ENCODE measurements at regions of chr1 and their contacts with region 1.

Region 1: GRCh38 chr1:197924516-197925123 is 7.4 kb downstream of the LHX9 start:
- DNase-seq: no peak
- H3K4me3 ChIP-seq: no peak overlapping the region
- H3K27ac ChIP-seq: no peak overlapping the region
- H3K4me1 ChIP-seq: peaks cover 0 to 6% (median 2%) of the 10 kb centered on the region in 4 donors
- H3K27me3 ChIP-seq: peaks cover 4 to 48% of the 10 kb centered on the region in 2 donors
- CTCF ChIP-seq: peak; percentile 61 to 68

Region 2: DNA sequence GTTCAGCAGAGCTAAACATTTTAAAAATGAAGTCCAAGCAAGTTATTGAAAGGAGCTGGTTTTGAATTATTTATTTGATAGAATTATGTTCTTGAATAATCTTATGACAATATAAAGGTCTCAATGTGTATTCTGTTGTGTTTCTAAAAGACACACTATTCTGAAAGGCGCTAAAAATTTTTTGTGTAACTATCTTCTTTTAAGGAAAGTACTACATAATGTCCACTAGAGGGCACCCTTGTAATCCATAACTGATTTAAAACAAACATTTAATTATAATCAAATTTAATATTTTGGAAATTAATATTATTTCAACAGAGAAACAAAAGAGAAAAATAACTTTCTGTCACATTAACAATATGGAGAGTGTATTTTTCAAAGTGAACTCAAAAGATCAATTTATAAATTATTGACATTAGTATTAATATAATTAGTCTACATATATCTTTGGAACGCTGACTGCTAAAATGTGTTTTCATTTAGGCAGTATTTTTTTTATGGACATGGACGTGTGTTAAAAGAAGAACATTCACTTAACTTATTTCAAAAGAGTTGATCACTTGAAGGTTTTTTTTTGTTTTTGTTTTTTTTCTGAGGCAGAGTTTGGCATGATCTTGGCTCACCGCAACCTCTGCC is 397.8 kb before region 1 on chr1:
- intact Hi-C with region 1: loop called (anchors 5 kb)
- DNase-seq: no peak
- H3K4me3 ChIP-seq: no peak overlapping the region
- H3K27ac ChIP-seq: no peak overlapping the region
- H3K4me1 ChIP-seq: peaks cover 0 to 7% (median 1%) of the 10 kb centered on the region in 4 donors
- H3K27me3 ChIP-seq: no peaks in the 10 kb centered on the region
- CTCF ChIP-seq: peak; percentile 38 to 68

Region 3: DNA sequence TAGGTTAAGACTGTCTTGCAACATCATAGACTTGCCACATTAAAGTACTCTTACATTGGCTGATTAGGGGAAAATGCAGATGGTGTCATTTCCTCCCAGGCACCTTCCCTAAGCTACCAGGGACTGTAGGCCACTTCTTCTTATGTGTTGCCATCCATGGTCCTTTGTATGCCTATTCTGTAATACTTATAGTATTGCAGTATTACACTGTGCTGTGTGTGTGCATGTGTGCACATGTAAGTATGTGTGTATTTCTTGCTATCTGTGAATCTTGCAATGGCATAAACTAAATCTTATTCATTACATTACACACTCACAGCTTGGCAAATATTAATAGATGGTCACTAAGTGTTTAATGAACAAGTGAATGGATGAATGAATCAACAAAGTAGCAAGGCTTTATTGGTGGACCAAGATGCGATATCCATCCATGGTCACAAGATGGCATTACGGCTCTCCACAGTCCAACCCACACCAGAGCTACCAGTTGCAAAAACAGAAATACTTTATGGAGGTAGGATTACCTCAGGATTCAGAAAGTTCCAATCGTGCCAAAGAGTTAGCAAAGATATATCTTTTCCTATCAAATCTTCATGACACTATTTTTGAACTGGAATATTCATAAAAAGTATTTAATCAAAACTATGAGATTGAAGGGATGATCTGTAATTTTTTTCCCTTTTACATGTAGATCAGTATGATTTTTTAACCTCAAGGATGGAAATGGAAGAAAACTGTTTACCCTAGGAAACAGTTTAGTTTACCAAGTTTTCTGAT is 309.5 kb before region 1 on chr1:
- intact Hi-C with region 1: loop called (anchors 5 kb)
- DNase-seq: peak in 1 of 2 donors; percentile 23
- H3K4me3 ChIP-seq: no peak overlapping the region
- H3K27ac ChIP-seq: no peak overlapping the region
- H3K4me1 ChIP-seq: no peaks in the 10 kb centered on the region
- H3K27me3 ChIP-seq: no peaks in the 10 kb centered on the region
- CTCF ChIP-seq: peak in 1 of 2 experiments; percentile 51

Measured in tibial artery (tissue), 4 donors.